IMR-90 (cell line): ENCODE measurements at regions of chr12 and their contacts with region 1.

Region 1: GRCh38 chr12:12724661-12725545 is 7.7 kb downstream of the CDKN1B start:
- DNase-seq: peak; percentile 100
- ATAC-seq: peak; percentile 65
- H3K4me3 ChIP-seq: peak overlapping the region; percentile 94
- H3K27ac ChIP-seq: peak overlapping the region; percentile 100
- H3K4me1 ChIP-seq: no peaks in the 10 kb centered on the region; the same call in 1 of the 2 replicates
- H3K27me3 ChIP-seq: no peaks in the 10 kb centered on the region
- CTCF ChIP-seq: no peak
- POLR2A ChIP-seq: peak; percentile 71
- RAD21 ChIP-seq: no peak

Region 2: GRCh38 chr12:11719678-11720099 is 1005.2 kb before region 1 on chr12:
- CTCF ChIA-PET with region 1: no interaction called
- POLR2A ChIA-PET with region 1: no interaction called
- dilution Hi-C with region 1: no loop called
- in situ Hi-C with region 1: loop called (anchors 25 kb)
- intact Hi-C with region 1: no loop called
- DNase-seq: peak; percentile 98
- ATAC-seq: peak; percentile 91
- H3K4me3 ChIP-seq: no peak overlapping the region
- H3K27ac ChIP-seq: peak overlapping the region; percentile 96
- H3K4me1 ChIP-seq: peaks cover 32% of the 10 kb centered on the region
- H3K27me3 ChIP-seq: no peaks in the 10 kb centered on the region
- CTCF ChIP-seq: no peak
- POLR2A ChIP-seq: peak; percentile 87
- RAD21 ChIP-seq: peak; percentile 27

Region 3: DNA sequence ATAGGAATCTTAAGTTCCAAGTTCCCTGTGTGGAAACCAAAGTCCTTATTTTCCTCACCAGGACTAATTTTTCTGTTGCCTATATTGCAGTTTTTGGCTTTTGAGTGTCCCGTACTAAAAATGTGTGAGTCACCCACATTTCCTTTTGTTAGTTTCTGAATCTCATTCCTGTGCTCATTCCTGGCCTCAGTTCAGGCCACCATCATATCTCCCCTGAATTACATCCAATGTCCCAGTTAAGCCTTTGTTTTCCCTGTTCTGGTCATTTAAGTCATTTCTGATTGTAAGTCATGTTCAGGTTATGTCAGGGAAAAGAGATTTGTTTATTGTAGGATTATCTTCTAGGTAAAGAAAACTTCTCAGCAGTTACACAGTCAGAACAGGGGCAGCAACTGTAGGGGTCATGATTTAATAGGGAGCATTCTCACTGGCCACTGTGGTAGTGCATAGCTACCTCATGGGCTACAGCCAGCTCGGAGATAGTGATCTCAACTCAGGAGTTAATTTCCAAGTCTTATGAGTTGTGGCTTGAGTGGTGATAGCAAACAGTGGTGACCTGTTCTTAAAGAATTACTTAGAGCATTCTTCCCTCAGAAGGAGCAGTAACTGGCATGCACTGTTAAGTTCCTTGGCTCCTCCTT is 94.9 kb after region 1 on chr12:
- CTCF ChIA-PET with region 1: no interaction called
- POLR2A ChIA-PET with region 1: no interaction called
- dilution Hi-C with region 1: no loop called
- in situ Hi-C with region 1: no loop called
- intact Hi-C with region 1: loop called (anchors 5 kb)
- DNase-seq: peak; percentile 96
- ATAC-seq: peak; percentile 84
- H3K4me3 ChIP-seq: no peak overlapping the region
- H3K27ac ChIP-seq: peak overlapping the region; percentile 66
- H3K4me1 ChIP-seq: peaks cover 25% of the 10 kb centered on the region
- H3K27me3 ChIP-seq: no peaks in the 10 kb centered on the region
- CTCF ChIP-seq: 0 out of 2 replicates have a peak, but pooled peaks have one; percentile 11
- POLR2A ChIP-seq: no peak
- RAD21 ChIP-seq: no peak

Region 4: GRCh38 chr12:12975322-12976077 is 250.6 kb after region 1 on chr12:
- CTCF ChIA-PET with region 1: no interaction called
- POLR2A ChIA-PET with region 1: no interaction called
- dilution Hi-C with region 1: no loop called
- in situ Hi-C with region 1: no loop called
- intact Hi-C with region 1: loop called (anchors 5 kb)
- DNase-seq: peak; percentile 59
- ATAC-seq: no peak
- H3K4me3 ChIP-seq: no peak overlapping the region
- H3K27ac ChIP-seq: peak overlapping the region; percentile 43
- H3K4me1 ChIP-seq: peaks cover 23% of the 10 kb centered on the region
- H3K27me3 ChIP-seq: no peaks in the 10 kb centered on the region
- CTCF ChIP-seq: peak; percentile 51
- POLR2A ChIP-seq: no peak
- RAD21 ChIP-seq: peak; percentile 57

Region 5: GRCh38 chr12:12992418-12993130 is 267.7 kb after region 1 on chr12:
- CTCF ChIA-PET with region 1: no interaction called
- POLR2A ChIA-PET with region 1: no interaction called
- dilution Hi-C with region 1: no loop called
- in situ Hi-C with region 1: no loop called
- intact Hi-C with region 1: loop called (anchors 5 kb)
- DNase-seq: peak; percentile 98
- ATAC-seq: peak; percentile 89
- H3K4me3 ChIP-seq: peak overlapping the region; percentile 2; the same call in 1 of the 2 replicates
- H3K27ac ChIP-seq: peak overlapping the region; percentile 99
- H3K4me1 ChIP-seq: peaks cover 22% of the 10 kb centered on the region
- H3K27me3 ChIP-seq: no peaks in the 10 kb centered on the region
- CTCF ChIP-seq: no peak
- POLR2A ChIP-seq: peak; percentile 30; the same call in 1 of the 2 replicates
- RAD21 ChIP-seq: peak; percentile 3; the same call in 1 of the 2 replicates

Region 6: GRCh38 chr12:13196130-13196921 is 471.4 kb after region 1 on chr12 and contains the start of gene EMP1:
- CTCF ChIA-PET with region 1: no interaction called
- POLR2A ChIA-PET with region 1: no interaction called
- dilution Hi-C with region 1: no loop called
- in situ Hi-C with region 1: no loop called
- intact Hi-C with region 1: loop called (anchors 10 kb)
- DNase-seq: peak; percentile 100
- ATAC-seq: peak; percentile 70
- H3K4me3 ChIP-seq: peak within 1 kb of the TSS; percentile 73
- H3K27ac ChIP-seq: peak within 1 kb of the TSS; percentile 94
- H3K4me1 ChIP-seq: peaks cover 20% of the 10 kb centered on the region
- H3K27me3 ChIP-seq: no peaks in the 10 kb centered on the region
- CTCF ChIP-seq: no peak
- POLR2A ChIP-seq: peak; percentile 99
- RAD21 ChIP-seq: 0 out of 2 replicates have a peak, but pooled peaks have one; percentile 3
- total RNA-seq, gene EMP1: 137 and 570 TPM in 2 replicates